CD4-positive, alpha-beta memory T cell (primary cell): ENCODE measurements at regions of chr5 and their contacts with region 1.

Region 1: GRCh38 chr5:138449501-138450239 is 10.8 kb downstream of the REEP2 start:
- DNase-seq: peak; percentile 59 to 71 (median 63)
- H3K4me3 ChIP-seq: no peak overlapping the region
- H3K4me3 Mint-ChIP-seq: peak overlapping the region in 4 of 8 donors; percentile 9 to 69 (median 44)
- H3K27ac ChIP-seq: no peak overlapping the region
- H3K27ac Mint-ChIP-seq: peak overlapping the region in 5 of 7 donors; percentile 42 to 81 (median 73)
- H3K4me1 ChIP-seq: peaks cover 8% of the 10 kb centered on the region
- H3K4me1 Mint-ChIP-seq: peaks cover 7 to 13% (median 10%) of the 10 kb centered on the region in 4 donors
- H3K27me3 ChIP-seq: no peaks in the 10 kb centered on the region
- H3K27me3 Mint-ChIP-seq: peaks cover 2 to 4% of the 10 kb centered on the region in 2 donors

Region 2: DNA sequence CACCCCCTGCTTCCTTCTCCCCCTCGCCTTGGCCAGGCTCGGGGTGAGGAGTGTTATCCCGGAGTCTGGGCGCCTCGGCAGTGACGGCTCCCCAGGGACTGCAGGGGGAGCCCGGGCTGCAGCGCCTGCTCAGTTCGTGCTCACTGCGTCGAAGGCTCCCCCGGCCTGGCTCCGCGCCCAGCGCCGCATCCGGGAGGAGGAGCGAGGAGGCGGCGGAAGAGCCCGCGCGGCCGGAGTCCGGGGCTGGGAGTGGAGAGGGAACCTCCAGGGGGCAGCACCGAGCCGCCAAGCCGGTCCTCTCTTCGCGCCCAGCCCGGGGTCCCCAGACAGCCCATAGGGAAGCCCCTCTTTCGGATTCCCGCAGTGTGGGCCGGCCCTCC is 14.3 kb after region 1 on chr5:
- CTCF ChIA-PET with region 1: interaction called, 46 read pairs
- POLR2A ChIA-PET with region 1: interaction called, 16 read pairs
- intact Hi-C with region 1: loop called (anchors 1 kb)
- DNase-seq: peak; percentile 91 to 95 (median 94)
- H3K4me3 ChIP-seq: peak overlapping the region; percentile 79 to 85
- H3K4me3 Mint-ChIP-seq: peak overlapping the region; percentile 85 to 97 (median 90)
- H3K27ac ChIP-seq: peak overlapping the region; percentile 90
- H3K27ac Mint-ChIP-seq: peak overlapping the region; percentile 89 to 96 (median 93)
- H3K4me1 ChIP-seq: peaks cover 46% of the 10 kb centered on the region
- H3K4me1 Mint-ChIP-seq: peaks cover 27 to 65% (median 39%) of the 10 kb centered on the region in 4 donors
- H3K27me3 ChIP-seq: no peaks in the 10 kb centered on the region
- H3K27me3 Mint-ChIP-seq: no peaks in the 10 kb centered on the region

Region 3: GRCh38 chr5:138508963-138509362 is 59.3 kb after region 1 on chr5:
- CTCF ChIA-PET with region 1: interaction called, 507 read pairs
- POLR2A ChIA-PET with region 1: interaction called, 7 read pairs
- intact Hi-C with region 1: no loop called
- DNase-seq: no peak
- H3K4me3 ChIP-seq: no peak overlapping the region
- H3K4me3 Mint-ChIP-seq: no peak overlapping the region
- H3K27ac ChIP-seq: no peak overlapping the region
- H3K27ac Mint-ChIP-seq: peak overlapping the region in 3 of 7 donors; percentile 24 to 60 (median 30)
- H3K4me1 ChIP-seq: no peaks in the 10 kb centered on the region
- H3K4me1 Mint-ChIP-seq: no peaks in the 10 kb centered on the region
- H3K27me3 ChIP-seq: no peaks in the 10 kb centered on the region
- H3K27me3 Mint-ChIP-seq: no peaks in the 10 kb centered on the region

Region 4: GRCh38 chr5:138542956-138543729 is 93.5 kb after region 1 on chr5 and contains the start of gene ETF1:
- CTCF ChIA-PET with region 1: interaction called, 4 read pairs
- POLR2A ChIA-PET with region 1: no interaction called
- intact Hi-C with region 1: loop called (anchors 1 kb)
- DNase-seq: peak; percentile 99 to 100 (median 100)
- H3K4me3 ChIP-seq: peak within 1 kb of the TSS; percentile 80 to 92
- H3K4me3 Mint-ChIP-seq: peak within 1 kb of the TSS; percentile 95 to 100 (median 100)
- H3K27ac ChIP-seq: peak within 1 kb of the TSS; percentile 100
- H3K27ac Mint-ChIP-seq: peak within 1 kb of the TSS; percentile 99 to 100 (median 100)
- H3K4me1 ChIP-seq: peaks cover 73% of the 10 kb centered on the region
- H3K4me1 Mint-ChIP-seq: peaks cover 48 to 87% (median 71%) of the 10 kb centered on the region in 4 donors
- H3K27me3 ChIP-seq: no peaks in the 10 kb centered on the region
- H3K27me3 Mint-ChIP-seq: no peaks in the 10 kb centered on the region
- total RNA-seq, gene ETF1: 42.6 to 46.5 TPM